Activated CD4-positive, alpha-beta memory T cell treated with anti-CD3 and anti-CD28 coated beads for 36 hours (primary cell): ENCODE measurements at regions of chr18 and their contacts with region 1.

Region 1: DNA sequence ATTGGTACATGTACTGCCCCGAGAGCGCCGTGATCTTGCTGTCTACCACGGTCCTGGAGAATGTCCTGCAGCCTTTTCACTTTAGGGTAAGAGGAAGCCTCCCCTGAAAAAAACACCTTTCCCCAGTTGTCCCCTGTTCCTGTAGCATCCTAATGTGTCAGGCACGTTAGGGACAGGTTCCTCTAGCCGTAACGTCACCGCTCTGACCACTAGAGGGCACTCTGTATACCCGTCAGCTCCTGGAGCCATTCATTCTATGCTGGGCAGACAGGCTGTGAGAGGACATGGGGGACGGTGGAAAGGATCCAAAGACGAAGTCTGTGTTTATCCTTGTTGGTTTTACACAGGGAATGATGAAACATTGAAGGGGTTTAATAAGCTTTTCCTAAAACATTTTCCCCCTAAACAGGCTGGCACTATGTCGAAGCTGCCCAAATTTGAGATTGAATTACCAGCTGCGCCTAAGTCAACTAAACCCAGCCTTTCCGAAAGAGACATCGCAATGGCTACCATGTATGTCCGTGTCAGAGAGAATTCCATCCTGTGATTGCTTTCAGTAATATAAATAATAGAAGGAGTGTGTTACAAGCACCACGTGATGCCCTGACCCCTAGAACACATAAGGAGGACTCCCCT is 12.7 kb downstream of the RMC1 start:
- DNase-seq: peak; percentile 83
- H3K4me3 Mint-ChIP-seq: no peak overlapping the region
- H3K27ac Mint-ChIP-seq: peak overlapping the region; percentile 30
- H3K4me1 Mint-ChIP-seq: peaks cover 15% of the 10 kb centered on the region
- H3K27me3 Mint-ChIP-seq: no peaks in the 10 kb centered on the region

Region 2: DNA sequence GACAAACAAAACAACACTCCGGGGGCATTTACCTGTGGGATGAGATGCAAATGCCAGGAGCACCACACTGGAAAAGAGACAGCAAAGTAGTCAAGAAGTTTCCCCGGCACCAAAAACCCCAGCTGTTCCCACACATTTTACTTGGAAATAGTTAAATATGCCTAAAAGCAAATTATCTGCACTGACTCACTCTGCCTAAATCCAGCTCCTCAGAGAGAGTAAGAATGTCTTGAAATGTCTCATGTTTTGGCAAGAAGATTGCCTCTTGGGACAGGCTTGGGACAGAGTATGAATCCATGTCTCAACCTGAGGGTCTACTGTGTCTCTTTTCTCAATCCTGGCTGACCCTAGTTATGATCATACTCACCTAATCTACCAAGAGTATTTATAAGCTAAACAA is 150.4 kb before region 1 on chr18:
- CTCF ChIA-PET with region 1: no interaction called
- POLR2A ChIA-PET with region 1: no interaction called
- intact Hi-C with region 1: no loop called
- DNase-seq: no peak
- H3K4me3 Mint-ChIP-seq: no peak overlapping the region
- H3K27ac Mint-ChIP-seq: no peak overlapping the region
- H3K4me1 Mint-ChIP-seq: no peaks in the 10 kb centered on the region
- H3K27me3 Mint-ChIP-seq: no peaks in the 10 kb centered on the region

Region 3: DNA sequence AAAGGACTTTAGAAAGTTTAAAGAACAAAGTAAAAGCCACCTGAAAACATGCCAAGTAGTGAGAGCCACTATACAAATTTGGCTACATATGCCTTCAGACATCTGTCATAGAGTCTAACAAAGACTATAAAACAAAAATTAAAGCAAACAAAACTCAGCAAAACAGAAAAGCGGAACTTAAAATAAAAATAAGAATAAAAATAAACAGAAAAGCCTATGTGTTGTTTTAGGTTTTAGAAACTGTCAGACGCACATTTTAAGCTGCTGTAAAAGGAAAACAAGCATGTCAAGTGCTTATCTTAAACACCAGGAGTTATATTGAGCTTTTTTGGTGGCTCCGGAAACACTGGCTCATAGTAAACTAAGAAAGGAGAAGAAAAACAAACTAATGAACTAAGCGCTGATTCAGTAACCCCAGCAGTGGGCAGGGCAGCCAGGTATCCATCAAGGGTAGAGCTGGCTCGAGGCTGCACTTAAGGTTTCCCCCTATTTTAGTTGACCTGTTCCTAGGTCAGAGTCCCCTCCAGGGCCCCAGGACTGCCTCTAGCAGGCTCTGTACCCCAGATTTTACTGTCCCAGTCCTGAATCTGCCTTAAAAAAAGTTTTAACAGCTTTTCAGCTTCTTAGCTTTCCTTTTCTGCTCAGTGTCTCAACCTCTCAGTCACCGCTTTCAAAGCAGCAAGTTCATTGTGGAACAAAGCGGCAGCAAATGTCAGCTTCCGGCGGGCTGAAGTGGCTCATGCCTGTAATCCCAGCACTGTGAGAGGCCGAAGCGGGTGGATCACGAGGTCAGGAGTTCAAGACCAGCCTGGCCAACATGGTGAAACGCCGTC is 28.1 kb before region 1 on chr18:
- CTCF ChIA-PET with region 1: interaction called, 11 read pairs
- POLR2A ChIA-PET with region 1: no interaction called
- intact Hi-C with region 1: no loop called
- DNase-seq: peak; percentile 71
- H3K4me3 Mint-ChIP-seq: peak overlapping the region; percentile 58
- H3K27ac Mint-ChIP-seq: peak overlapping the region; percentile 76
- H3K4me1 Mint-ChIP-seq: peaks cover 12% of the 10 kb centered on the region
- H3K27me3 Mint-ChIP-seq: no peaks in the 10 kb centered on the region

Region 4: GRCh38 chr18:23573626-23574431 is 57.8 kb after region 1 on chr18:
- CTCF ChIA-PET with region 1: interaction called, 12 read pairs
- POLR2A ChIA-PET with region 1: no interaction called
- intact Hi-C with region 1: no loop called
- DNase-seq: peak; percentile 73
- H3K4me3 Mint-ChIP-seq: peak overlapping the region; percentile 43
- H3K27ac Mint-ChIP-seq: peak overlapping the region; percentile 88
- H3K4me1 Mint-ChIP-seq: peaks cover 50% of the 10 kb centered on the region
- H3K27me3 Mint-ChIP-seq: no peaks in the 10 kb centered on the region

Region 5: GRCh38 chr18:23580677-23581367 is 64.8 kb after region 1 on chr18:
- CTCF ChIA-PET with region 1: interaction called, 59 read pairs
- POLR2A ChIA-PET with region 1: interaction called, 3 read pairs
- intact Hi-C with region 1: no loop called
- DNase-seq: no peak
- H3K4me3 Mint-ChIP-seq: no peak overlapping the region
- H3K27ac Mint-ChIP-seq: no peak overlapping the region
- H3K4me1 Mint-ChIP-seq: peaks cover 60% of the 10 kb centered on the region
- H3K27me3 Mint-ChIP-seq: no peaks in the 10 kb centered on the region

Region 6: GRCh38 chr18:23586249-23587196 is 70.5 kb after region 1 on chr18 and contains the start of gene NPC1:
- CTCF ChIA-PET with region 1: interaction called, 59 read pairs
- POLR2A ChIA-PET with region 1: interaction called, 3 read pairs
- intact Hi-C with region 1: loop called (anchors 1 kb)
- DNase-seq: peak; percentile 94
- H3K4me3 Mint-ChIP-seq: peak within 1 kb of the TSS; percentile 95
- H3K27ac Mint-ChIP-seq: peak within 1 kb of the TSS; percentile 93
- H3K4me1 Mint-ChIP-seq: peaks cover 30% of the 10 kb centered on the region
- H3K27me3 Mint-ChIP-seq: peaks cover 3% of the 10 kb centered on the region
- total RNA-seq, gene NPC1: 39.3 to 39.9 TPM

Region 7: GRCh38 chr18:23812546-23813440 is 296.8 kb after region 1 on chr18:
- CTCF ChIA-PET with region 1: no interaction called
- POLR2A ChIA-PET with region 1: no interaction called
- intact Hi-C with region 1: loop called (anchors 5 kb)
- DNase-seq: no peak
- H3K4me3 Mint-ChIP-seq: no peak overlapping the region
- H3K27ac Mint-ChIP-seq: no peak overlapping the region
- H3K4me1 Mint-ChIP-seq: peaks cover 6% of the 10 kb centered on the region
- H3K27me3 Mint-ChIP-seq: peaks cover 5% of the 10 kb centered on the region